ENCODE measurements at regions of chr7 and their contacts with region 1.

Region 1: DNA sequence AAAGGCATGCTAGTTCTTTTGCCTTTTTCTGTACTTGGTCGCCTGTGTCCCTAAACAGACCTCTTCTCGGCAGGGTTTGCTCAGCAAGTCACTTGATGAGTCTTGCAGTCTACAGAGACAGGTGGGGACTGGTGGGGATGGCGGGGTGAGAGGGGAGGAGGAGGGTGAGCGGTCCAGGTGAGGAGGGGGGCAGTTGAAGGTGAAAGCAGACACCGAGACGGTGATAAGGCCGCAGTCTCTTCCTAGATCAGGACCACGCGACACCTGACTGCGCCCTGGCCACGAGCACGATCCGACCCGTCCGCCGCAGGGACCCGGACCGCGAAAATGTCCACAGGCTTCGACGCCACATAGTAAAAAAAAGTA is 566 bp downstream of the ASNS start:
- DNase-seq: no peak
- H3K4me3 ChIP-seq: peak overlapping the region; percentile 73
- H3K27ac ChIP-seq: peak overlapping the region; percentile 91
- H3K4me1 ChIP-seq: peaks cover 15% of the 10 kb centered on the region
- H3K27me3 ChIP-seq: no peaks in the 10 kb centered on the region
- CTCF ChIP-seq: no peak

Region 2: GRCh38 chr7:96005271-96005670 is 1866.4 kb before region 1 on chr7:
- CTCF ChIA-PET with region 1: no interaction called
- POLR2A ChIA-PET with region 1: interaction called, 23 read pairs
- intact Hi-C with region 1: no loop called
- DNase-seq: no peak
- H3K4me3 ChIP-seq: no peak overlapping the region
- H3K27ac ChIP-seq: no peak overlapping the region
- H3K4me1 ChIP-seq: peaks cover 16% of the 10 kb centered on the region
- H3K27me3 ChIP-seq: no peaks in the 10 kb centered on the region
- CTCF ChIP-seq: no peak

Measured in A673 (cell line).